GM12878 (cell line): ENCODE measurements at regions of chr3 and their contacts with region 1.

Region 1: DNA sequence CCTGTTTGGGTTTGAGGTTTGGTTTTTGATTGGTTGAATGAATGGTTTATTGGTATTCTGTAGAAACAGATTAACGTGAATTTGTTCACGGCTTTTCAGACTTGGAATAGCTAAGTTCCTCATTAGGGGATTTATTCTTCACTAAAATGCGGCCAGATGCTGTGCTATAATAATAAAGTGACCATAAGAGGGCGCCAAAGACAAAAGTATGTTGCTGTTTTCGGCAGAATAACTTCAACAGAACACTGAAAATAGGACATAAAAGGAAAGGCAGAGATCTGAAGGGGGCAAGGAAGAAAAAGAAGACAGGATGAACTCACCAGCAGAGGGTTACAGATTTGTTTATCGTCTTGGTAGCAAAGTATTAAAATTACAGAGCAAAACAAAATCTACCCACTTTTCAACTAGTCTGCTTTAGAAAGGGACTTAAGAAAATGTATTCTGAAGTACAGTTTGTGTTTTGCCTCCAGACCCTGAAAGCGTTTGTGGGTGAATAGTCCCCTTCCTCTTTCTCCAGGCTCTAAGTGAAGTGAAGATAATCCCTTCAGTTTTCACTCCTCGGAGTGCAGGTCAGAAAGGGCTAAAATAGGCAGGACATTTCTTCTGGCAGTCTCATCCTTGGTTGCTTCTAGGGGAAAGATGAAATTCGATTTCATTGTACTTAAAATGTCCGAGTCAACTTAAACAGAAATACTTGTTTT is 147.6 kb downstream of the IL20RB start:
- DNase-seq: peak; percentile 19
- ATAC-seq: peak; percentile 88
- H3K4me3 ChIP-seq: no peak overlapping the region
- H3K27ac ChIP-seq: no peak overlapping the region
- H3K4me1 ChIP-seq: no peaks in the 10 kb centered on the region
- H3K27me3 ChIP-seq: no peaks in the 10 kb centered on the region; a peak in 1 of 4 replicates
- CTCF ChIP-seq: peak; percentile 51 to 76 (median 67); a peak in 5 of 6 replicates
- EP300 ChIP-seq: no peak
- POLR2A ChIP-seq: no peak
- RAD21 ChIP-seq: peak; percentile 94

Region 2: GRCh38 chr3:136311975-136312374 is 793.5 kb before region 1 on chr3:
- CTCF ChIA-PET with region 1: no interaction called
- POLR2A ChIA-PET with region 1: no interaction called
- RAD21 ChIA-PET with region 1: no interaction called
- SMC1A ChIA-PET with region 1: no interaction called
- in situ Hi-C with region 1: no loop called
- intact Hi-C with region 1: no loop called
- DNase-seq: no peak
- ATAC-seq: no peak
- H3K4me3 ChIP-seq: no peak overlapping the region
- H3K27ac ChIP-seq: no peak overlapping the region
- H3K4me1 ChIP-seq: no peaks in the 10 kb centered on the region
- H3K27me3 ChIP-seq: no peaks in the 10 kb centered on the region
- CTCF ChIP-seq: no peak
- EP300 ChIP-seq: no peak
- POLR2A ChIP-seq: no peak
- RAD21 ChIP-seq: no peak

Region 3: GRCh38 chr3:137008131-137008530 is 97.3 kb before region 1 on chr3:
- CTCF ChIA-PET with region 1: no interaction called
- POLR2A ChIA-PET with region 1: no interaction called
- RAD21 ChIA-PET with region 1: no interaction called
- SMC1A ChIA-PET with region 1: no interaction called
- in situ Hi-C with region 1: no loop called
- intact Hi-C with region 1: no loop called
- DNase-seq: no peak
- ATAC-seq: no peak
- H3K4me3 ChIP-seq: no peak overlapping the region
- H3K27ac ChIP-seq: no peak overlapping the region
- H3K4me1 ChIP-seq: no peaks in the 10 kb centered on the region
- H3K27me3 ChIP-seq: no peaks in the 10 kb centered on the region
- CTCF ChIP-seq: no peak
- EP300 ChIP-seq: no peak
- POLR2A ChIP-seq: no peak
- RAD21 ChIP-seq: no peak

Region 4: GRCh38 chr3:137032465-137033120 is 72.8 kb before region 1 on chr3:
- CTCF ChIA-PET with region 1: interaction called, 29 read pairs
- POLR2A ChIA-PET with region 1: no interaction called
- RAD21 ChIA-PET with region 1: interaction called, 14 read pairs
- SMC1A ChIA-PET with region 1: interaction called, 3 read pairs
- in situ Hi-C with region 1: no loop called
- intact Hi-C with region 1: loop called (anchors 2 kb)
- DNase-seq: peak; percentile 13
- ATAC-seq: peak; percentile 97
- H3K4me3 ChIP-seq: peak overlapping the region; percentile 22; the same call in 1 of the 2 replicates
- H3K27ac ChIP-seq: no peak overlapping the region
- H3K4me1 ChIP-seq: no peaks in the 10 kb centered on the region
- H3K27me3 ChIP-seq: no peaks in the 10 kb centered on the region
- CTCF ChIP-seq: peak; percentile 96 to 100 (median 99)
- EP300 ChIP-seq: no peak
- POLR2A ChIP-seq: no peak
- RAD21 ChIP-seq: peak; percentile 95

Region 5: DNA sequence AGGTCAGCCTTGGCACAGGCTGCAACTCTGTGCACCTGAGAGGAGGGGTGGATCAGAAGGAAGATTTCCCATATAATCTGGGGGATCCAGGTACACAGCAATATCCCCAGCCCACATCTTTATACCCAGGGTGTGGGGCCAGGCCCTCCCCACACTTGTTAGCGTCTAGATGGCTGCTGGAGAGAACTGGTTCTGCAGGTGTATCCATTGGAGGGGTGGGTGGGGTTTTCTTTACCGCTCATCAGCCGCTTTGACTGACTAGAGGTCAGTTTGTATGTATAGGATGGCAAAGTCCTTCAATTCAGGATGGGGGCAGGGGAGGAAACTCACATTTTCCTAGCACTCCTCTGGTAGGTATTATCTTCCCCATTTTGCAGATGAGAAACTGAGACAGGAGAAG is 55.1 kb before region 1 on chr3:
- CTCF ChIA-PET with region 1: no interaction called
- POLR2A ChIA-PET with region 1: no interaction called
- RAD21 ChIA-PET with region 1: no interaction called
- SMC1A ChIA-PET with region 1: no interaction called
- in situ Hi-C with region 1: no loop called
- intact Hi-C with region 1: no loop called
- DNase-seq: no peak
- ATAC-seq: no peak
- H3K4me3 ChIP-seq: no peak overlapping the region
- H3K27ac ChIP-seq: no peak overlapping the region
- H3K4me1 ChIP-seq: no peaks in the 10 kb centered on the region
- H3K27me3 ChIP-seq: no peaks in the 10 kb centered on the region
- CTCF ChIP-seq: no peak
- EP300 ChIP-seq: no peak
- POLR2A ChIP-seq: no peak
- RAD21 ChIP-seq: no peak

Region 6: GRCh38 chr3:137079572-137079971 is 25.9 kb before region 1 on chr3:
- CTCF ChIA-PET with region 1: no interaction called
- POLR2A ChIA-PET with region 1: no interaction called
- RAD21 ChIA-PET with region 1: no interaction called
- SMC1A ChIA-PET with region 1: no interaction called
- in situ Hi-C with region 1: no loop called
- intact Hi-C with region 1: no loop called
- DNase-seq: no peak
- ATAC-seq: no peak
- H3K4me3 ChIP-seq: no peak overlapping the region
- H3K27ac ChIP-seq: no peak overlapping the region
- H3K4me1 ChIP-seq: no peaks in the 10 kb centered on the region
- H3K27me3 ChIP-seq: no peaks in the 10 kb centered on the region
- CTCF ChIP-seq: no peak
- EP300 ChIP-seq: no peak
- POLR2A ChIP-seq: no peak
- RAD21 ChIP-seq: no peak

Region 7: GRCh38 chr3:137692803-137693431 is 587.5 kb after region 1 on chr3:
- CTCF ChIA-PET with region 1: interaction called, 44 read pairs
- POLR2A ChIA-PET with region 1: no interaction called
- RAD21 ChIA-PET with region 1: interaction called, 22 read pairs
- SMC1A ChIA-PET with region 1: interaction called, 22 read pairs
- in situ Hi-C with region 1: no loop called
- intact Hi-C with region 1: loop called (anchors 2 kb)
- DNase-seq: peak; percentile 3
- ATAC-seq: peak; percentile 86
- H3K4me3 ChIP-seq: no peak overlapping the region
- H3K27ac ChIP-seq: no peak overlapping the region
- H3K4me1 ChIP-seq: no peaks in the 10 kb centered on the region
- H3K27me3 ChIP-seq: no peaks in the 10 kb centered on the region
- CTCF ChIP-seq: peak; percentile 64 to 75 (median 66)
- EP300 ChIP-seq: no peak
- POLR2A ChIP-seq: no peak
- RAD21 ChIP-seq: peak; percentile 80

Region 8: DNA sequence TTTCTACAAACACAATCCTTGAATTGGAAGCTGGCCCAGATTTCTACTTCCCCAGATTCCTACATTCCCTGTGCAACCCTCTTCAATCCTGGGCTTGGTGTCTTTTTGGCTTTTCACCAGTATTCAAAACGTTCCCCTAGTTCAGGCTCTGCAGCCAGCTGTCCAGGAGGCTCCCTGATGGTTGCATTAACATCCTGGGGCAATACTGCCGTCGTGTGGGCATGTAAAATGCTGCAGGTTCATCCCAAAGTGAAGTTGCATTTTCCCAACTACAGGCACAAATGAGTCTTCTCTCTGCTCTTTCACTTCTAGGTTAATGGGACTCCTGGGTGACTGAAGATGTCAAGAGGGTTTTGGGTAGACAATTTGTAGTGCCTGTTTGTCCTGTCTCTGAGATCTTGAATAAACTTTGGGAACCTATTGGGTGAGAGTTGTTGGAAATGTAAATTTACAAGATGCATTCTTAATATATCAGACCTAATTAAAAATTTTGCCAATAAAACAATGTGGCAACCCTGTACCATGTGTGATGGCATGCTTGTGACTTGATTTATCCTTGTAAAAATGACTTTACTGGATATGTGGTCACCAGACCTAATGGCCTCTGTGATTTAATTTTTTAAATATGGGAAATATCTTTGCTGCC is 687.3 kb after region 1 on chr3:
- CTCF ChIA-PET with region 1: interaction called, 8 read pairs
- POLR2A ChIA-PET with region 1: no interaction called
- RAD21 ChIA-PET with region 1: no interaction called
- SMC1A ChIA-PET with region 1: interaction called, 4 read pairs
- in situ Hi-C with region 1: no loop called
- intact Hi-C with region 1: loop called (anchors 5 kb)
- DNase-seq: no peak
- ATAC-seq: 0 out of 3 replicates have a peak, but pooled peaks have one; percentile 27
- H3K4me3 ChIP-seq: no peak overlapping the region
- H3K27ac ChIP-seq: no peak overlapping the region
- H3K4me1 ChIP-seq: no peaks in the 10 kb centered on the region
- H3K27me3 ChIP-seq: no peaks in the 10 kb centered on the region; a peak in 1 of 4 replicates
- CTCF ChIP-seq: peak; percentile 42 to 74 (median 71)
- EP300 ChIP-seq: no peak
- POLR2A ChIP-seq: no peak
- RAD21 ChIP-seq: peak; percentile 84

Region 9: DNA sequence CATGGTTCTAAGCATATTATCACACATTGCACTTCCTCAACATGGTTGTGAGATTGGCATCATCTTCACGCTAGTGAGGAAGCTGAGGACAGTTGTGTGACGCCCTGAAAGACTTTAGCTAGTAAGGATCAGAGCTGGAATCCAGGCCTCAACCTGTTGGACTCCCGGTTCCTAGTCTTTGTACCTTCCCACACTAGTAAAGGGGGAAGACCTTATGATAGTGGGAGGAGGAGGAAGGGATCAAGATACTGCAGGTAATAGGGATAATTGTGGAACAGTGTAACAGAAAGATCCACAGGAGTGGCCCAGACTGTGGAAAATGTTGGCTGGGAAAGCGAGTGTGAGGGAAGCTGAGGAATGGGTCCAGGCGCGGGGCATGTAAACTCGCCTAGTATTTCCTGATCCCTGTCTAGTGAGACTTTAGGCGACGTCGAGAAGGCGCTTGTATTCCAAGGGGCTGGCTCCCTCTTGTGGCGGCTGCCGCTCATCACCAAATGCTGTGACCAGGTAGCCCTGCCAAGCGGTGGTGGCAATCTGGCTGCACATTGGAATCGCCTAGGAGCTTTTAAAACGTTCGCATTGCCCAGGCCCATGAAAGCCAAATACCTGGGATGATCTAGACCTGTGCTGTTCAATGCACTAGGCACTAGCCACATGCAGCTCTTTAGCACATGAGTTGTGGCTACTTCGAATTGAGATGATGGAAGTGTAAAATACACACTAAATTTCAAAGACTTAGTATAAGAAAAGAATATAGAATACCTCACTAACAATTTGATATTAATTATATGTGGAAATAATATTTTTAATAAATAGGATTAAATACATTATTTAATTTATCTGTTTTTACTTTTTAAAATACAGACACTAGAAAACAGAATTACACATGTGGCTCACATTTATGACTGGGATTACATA is 865.7 kb after region 1 on chr3:
- CTCF ChIA-PET with region 1: interaction called, 23 read pairs
- POLR2A ChIA-PET with region 1: no interaction called
- RAD21 ChIA-PET with region 1: no interaction called
- SMC1A ChIA-PET with region 1: interaction called, 8 read pairs
- in situ Hi-C with region 1: no loop called
- intact Hi-C with region 1: loop called (anchors 1 kb)
- DNase-seq: no peak
- ATAC-seq: peak; percentile 99
- H3K4me3 ChIP-seq: no peak overlapping the region
- H3K27ac ChIP-seq: no peak overlapping the region
- H3K4me1 ChIP-seq: no peaks in the 10 kb centered on the region
- H3K27me3 ChIP-seq: no peaks in the 10 kb centered on the region
- CTCF ChIP-seq: peak; percentile 80 to 87 (median 86)
- EP300 ChIP-seq: no peak
- POLR2A ChIP-seq: no peak
- RAD21 ChIP-seq: peak; percentile 72